ENCODE measurements at regions of chr1 and their contacts with region 1.

Region 1: DNA sequence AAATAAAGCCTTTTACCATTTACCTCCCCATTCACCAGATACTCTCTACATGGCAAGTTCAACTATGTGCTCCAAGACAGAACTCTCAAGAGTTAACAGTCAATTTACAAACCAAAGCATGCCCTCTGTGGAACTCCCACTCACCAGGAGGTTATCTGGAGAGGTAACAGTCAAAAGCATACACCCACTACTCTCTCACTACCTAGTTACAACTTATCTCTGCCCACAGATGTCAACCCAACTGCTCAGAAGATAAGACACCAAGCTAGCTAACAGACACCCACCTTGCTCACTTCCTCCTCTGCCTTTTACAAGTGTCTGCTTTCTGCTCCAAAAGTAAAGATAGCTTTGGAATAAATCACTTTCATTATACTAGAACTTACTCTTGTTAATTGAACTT is 131.0 kb downstream of the TRIM33 start:
- DNase-seq: no peak
- H3K4me3 ChIP-seq: no peak overlapping the region
- H3K27ac ChIP-seq: no peak overlapping the region
- H3K4me1 ChIP-seq: no peaks in the 10 kb centered on the region
- CTCF ChIP-seq: no peak

Region 2: DNA sequence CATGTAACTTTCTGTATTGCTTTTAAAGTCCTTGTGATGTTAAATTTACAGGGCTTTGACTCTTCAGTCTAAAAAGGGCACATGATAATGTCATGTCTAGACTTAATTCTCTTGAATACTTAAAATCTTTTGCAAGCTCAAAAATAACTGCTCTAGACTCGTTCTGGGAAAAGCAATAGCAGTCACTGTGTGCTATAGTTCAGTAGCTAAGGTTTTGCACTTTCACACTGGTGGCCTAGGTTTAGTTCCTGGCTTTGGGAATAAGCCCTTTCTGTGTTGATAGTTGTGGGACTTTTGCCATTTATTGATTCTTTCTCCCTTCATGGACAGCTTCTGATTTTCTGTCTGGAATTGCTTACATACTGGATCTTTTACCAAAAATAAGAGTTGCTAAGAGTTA is 20.2 kb before region 1 on chr1:
- CTCF ChIA-PET with region 1: no interaction called
- POLR2A ChIA-PET with region 1: no interaction called
- intact Hi-C with region 1: loop called (anchors 2 kb)
- DNase-seq: no peak
- H3K4me3 ChIP-seq: no peak overlapping the region
- H3K27ac ChIP-seq: no peak overlapping the region
- H3K4me1 ChIP-seq: no peaks in the 10 kb centered on the region
- CTCF ChIP-seq: no peak

Region 3: DNA sequence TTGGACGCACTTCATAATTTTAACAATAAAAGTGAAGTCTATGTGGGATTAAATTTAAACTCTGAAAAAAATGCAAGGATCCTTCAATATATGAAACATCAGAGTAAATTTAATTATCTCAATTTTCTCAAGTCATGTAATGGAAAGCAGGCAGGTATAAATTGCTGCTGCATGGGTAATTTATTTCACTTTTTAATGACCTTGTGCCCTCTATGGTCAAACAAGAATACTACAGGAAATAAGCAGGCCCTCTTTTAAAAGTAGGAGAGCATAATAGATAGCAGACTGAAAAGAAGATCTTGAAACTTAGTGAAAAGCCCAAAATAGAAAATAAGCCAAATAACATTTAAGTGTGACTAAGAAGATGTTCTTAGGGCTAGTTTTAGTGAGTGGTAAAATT is 178.6 kb after region 1 on chr1:
- CTCF ChIA-PET with region 1: no interaction called
- POLR2A ChIA-PET with region 1: no interaction called
- intact Hi-C with region 1: no loop called
- DNase-seq: peak; percentile 57
- H3K4me3 ChIP-seq: no peak overlapping the region
- H3K27ac ChIP-seq: no peak overlapping the region
- H3K4me1 ChIP-seq: no peaks in the 10 kb centered on the region
- CTCF ChIP-seq: peak; percentile 88